Gastrocnemius medialis (tissue), 4 donors: ENCODE measurements at regions of chr18 and their contacts with region 1.

Region 1: GRCh38 chr18:26090130-26091046 is at the start of gene SS18:
- DNase-seq: peak; percentile 81 to 89
- ATAC-seq: peak; percentile 91 to 93
- H3K4me3 ChIP-seq: peak within 1 kb of the TSS; percentile 79 to 94 (median 85)
- H3K27ac ChIP-seq: peak within 1 kb of the TSS; percentile 89 to 92 (median 91)
- H3K4me1 ChIP-seq: peaks cover 19 to 21% of the 10 kb centered on the region in 2 donors
- H3K27me3 ChIP-seq: no peaks in the 10 kb centered on the region
- CTCF ChIP-seq: peak in 1 of 5 experiments; percentile 9
- POLR2A ChIP-seq: peak; percentile 48 to 54
- total RNA-seq, gene SS18: 17.3 to 25.7 (median 21.6) TPM

Region 2: DNA sequence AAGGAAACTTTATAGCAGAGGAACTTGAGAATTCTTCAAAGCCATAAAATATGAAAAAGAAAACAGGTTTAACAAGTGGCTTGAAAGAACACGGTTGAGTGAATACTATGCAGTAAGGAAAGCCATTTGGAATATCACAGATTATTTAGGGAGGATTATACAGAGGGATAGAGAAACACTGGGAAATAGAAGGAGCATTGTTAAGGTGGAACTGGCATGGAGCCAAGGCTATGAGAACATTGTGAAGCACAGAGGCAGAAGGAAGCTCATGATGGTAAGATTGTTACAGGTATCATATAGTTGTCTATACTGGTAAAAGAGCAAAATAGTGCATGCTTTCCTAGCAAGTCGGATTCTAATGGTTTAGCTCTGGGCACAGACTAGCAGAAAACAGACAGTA is 87.0 kb before region 1 on chr18:
- in situ Hi-C with region 1: no loop called
- intact Hi-C with region 1: no loop called
- DNase-seq: no peak
- ATAC-seq: no peak
- H3K4me3 ChIP-seq: no peak overlapping the region
- H3K27ac ChIP-seq: no peak overlapping the region
- H3K4me1 ChIP-seq: no peaks in the 10 kb centered on the region
- H3K27me3 ChIP-seq: no peaks in the 10 kb centered on the region
- CTCF ChIP-seq: no peak
- POLR2A ChIP-seq: no peak

Region 3: GRCh38 chr18:26226229-26227005 is 136.0 kb after region 1 on chr18 and contains the start of gene TAF4B:
- in situ Hi-C with region 1: no loop called
- intact Hi-C with region 1: loop called (anchors 2 kb)
- DNase-seq: peak; percentile 89 to 91
- ATAC-seq: peak; percentile 91 to 95
- H3K4me3 ChIP-seq: peak within 1 kb of the TSS; percentile 69 to 92 (median 90)
- H3K27ac ChIP-seq: peak within 1 kb of the TSS; percentile 81 to 93 (median 90)
- H3K4me1 ChIP-seq: peaks cover 9 to 18% of the 10 kb centered on the region in 2 donors
- H3K27me3 ChIP-seq: no peaks in the 10 kb centered on the region
- CTCF ChIP-seq: peak in 1 of 5 experiments; percentile 12
- POLR2A ChIP-seq: peak; percentile 55 to 92
- total RNA-seq, gene TAF4B: 5.1 to 9.2 (median 6.7) TPM

Region 4: DNA sequence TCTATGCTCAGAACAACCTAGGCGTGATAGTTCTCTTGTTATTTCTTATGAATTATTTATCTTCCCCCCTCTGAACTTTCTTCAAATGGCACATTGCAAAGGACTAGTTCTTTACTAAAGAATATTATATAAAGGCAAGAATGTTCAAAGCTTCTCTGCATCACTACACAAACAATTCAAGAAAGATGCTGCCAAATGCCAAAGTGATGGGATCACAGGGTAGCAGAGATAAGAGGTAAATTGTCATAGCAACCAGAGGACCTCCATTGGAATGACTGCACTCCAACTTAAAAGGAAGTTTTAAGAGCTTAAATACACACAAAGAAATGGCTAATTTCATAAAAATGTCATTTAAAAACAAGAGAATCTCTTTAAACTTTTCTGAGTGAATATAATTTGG is 702.3 kb after region 1 on chr18:
- in situ Hi-C with region 1: no loop called
- intact Hi-C with region 1: no loop called
- DNase-seq: no peak
- ATAC-seq: no peak
- H3K4me3 ChIP-seq: no peak overlapping the region
- H3K27ac ChIP-seq: no peak overlapping the region
- H3K4me1 ChIP-seq: no peaks in the 10 kb centered on the region
- H3K27me3 ChIP-seq: no peaks in the 10 kb centered on the region
- CTCF ChIP-seq: no peak
- POLR2A ChIP-seq: no peak